ENCODE measurements at regions of chr16 and their contacts with region 1.

Region 1: GRCh38 chr16:16073891-16074881 is 124.8 kb downstream of the ABCC1 start:
- DNase-seq: peak; percentile 98 to 99
- H3K4me3 ChIP-seq: no peak overlapping the region; the same call in 1 of the 2 replicates
- H3K27ac ChIP-seq: peak overlapping the region; percentile 85
- H3K4me1 ChIP-seq: peaks cover 27% of the 10 kb centered on the region
- H3K27me3 ChIP-seq: no peaks in the 10 kb centered on the region
- CTCF ChIP-seq: no peak

Region 2: DNA sequence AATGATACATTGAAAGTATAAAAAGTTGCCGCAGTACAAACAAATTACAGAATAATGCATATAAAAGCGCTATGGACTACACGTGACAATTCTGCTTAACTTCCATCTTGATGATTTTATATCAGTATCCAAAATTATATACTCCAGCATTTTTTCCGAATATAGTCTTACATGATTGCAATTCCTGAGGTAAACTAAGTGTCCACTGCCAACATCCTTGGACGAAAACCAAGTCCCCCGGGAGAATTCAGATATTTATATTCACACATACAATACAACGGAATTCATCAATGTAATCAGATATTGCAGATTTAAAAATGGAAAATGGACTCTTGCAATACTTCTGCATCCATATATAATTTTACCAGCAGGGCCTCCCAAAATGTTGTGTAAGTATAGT is 208.4 kb before region 1 on chr16:
- CTCF ChIA-PET with region 1: no interaction called
- POLR2A ChIA-PET with region 1: interaction called, 12 read pairs
- intact Hi-C with region 1: no loop called
- DNase-seq: no peak
- H3K4me3 ChIP-seq: no peak overlapping the region
- H3K27ac ChIP-seq: no peak overlapping the region
- H3K4me1 ChIP-seq: no peaks in the 10 kb centered on the region
- H3K27me3 ChIP-seq: no peaks in the 10 kb centered on the region
- CTCF ChIP-seq: no peak

Region 3: DNA sequence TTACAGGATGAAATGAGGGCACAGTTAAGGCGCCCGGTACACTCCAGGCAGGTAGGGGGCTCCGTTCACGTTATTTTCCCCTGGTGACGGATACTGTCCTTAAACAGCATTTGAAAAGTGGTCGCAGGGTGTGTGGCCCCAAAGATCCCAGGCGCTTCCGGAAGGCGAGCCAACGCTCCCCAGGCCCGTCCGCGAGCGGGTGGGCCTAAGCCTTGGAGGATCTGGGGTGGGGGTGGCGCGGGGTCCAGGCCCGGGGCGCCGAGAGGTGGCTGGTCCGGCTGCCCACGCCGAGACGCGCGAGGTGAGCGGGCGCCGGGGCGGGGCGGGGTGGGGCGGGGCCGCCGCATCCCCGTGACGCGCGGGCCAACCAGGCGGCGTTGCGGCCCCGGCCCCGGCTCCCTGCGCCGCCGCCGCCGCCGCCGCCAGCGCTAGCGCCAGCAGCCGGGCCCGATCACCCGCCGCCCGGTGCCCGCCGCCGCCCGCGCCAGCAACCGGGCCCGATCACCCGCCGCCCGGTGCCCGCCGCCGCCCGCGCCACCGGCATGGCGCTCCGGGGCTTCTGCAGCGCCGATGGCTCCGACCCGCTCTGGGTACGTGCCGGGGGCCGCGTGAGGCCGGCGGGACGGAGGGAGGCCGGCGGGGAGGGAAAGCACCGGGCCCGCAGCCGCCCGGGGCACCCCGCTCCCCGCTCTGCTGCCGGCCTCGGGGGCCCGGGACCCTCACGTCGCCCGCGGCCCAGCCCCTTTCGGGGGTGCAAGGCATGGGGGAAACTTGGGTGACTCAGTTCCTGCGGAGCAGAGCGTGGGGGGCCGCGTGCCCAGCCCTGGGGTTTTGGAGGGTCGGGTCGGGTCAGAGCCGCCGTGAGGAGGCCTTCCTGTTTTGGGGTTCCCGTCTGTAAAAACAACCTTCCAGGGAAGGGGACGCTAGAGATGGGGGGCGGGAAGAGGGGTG is 124.7 kb before region 1 on chr16 and contains the start of gene ABCC1:
- CTCF ChIA-PET with region 1: interaction called, 3 read pairs
- POLR2A ChIA-PET with region 1: no interaction called
- intact Hi-C with region 1: loop called (anchors 1 kb)
- DNase-seq: peak in 1 of 2 experiments; percentile 51
- H3K4me3 ChIP-seq: peak within 1 kb of the TSS; percentile 96
- H3K27ac ChIP-seq: peak within 1 kb of the TSS; percentile 61
- H3K4me1 ChIP-seq: peaks cover 52% of the 10 kb centered on the region
- H3K27me3 ChIP-seq: no peaks in the 10 kb centered on the region
- CTCF ChIP-seq: no peak; the same call in 1 of the 2 replicates
- total RNA-seq, gene ABCC1: 139 and 146 TPM in 2 replicates

Region 4: DNA sequence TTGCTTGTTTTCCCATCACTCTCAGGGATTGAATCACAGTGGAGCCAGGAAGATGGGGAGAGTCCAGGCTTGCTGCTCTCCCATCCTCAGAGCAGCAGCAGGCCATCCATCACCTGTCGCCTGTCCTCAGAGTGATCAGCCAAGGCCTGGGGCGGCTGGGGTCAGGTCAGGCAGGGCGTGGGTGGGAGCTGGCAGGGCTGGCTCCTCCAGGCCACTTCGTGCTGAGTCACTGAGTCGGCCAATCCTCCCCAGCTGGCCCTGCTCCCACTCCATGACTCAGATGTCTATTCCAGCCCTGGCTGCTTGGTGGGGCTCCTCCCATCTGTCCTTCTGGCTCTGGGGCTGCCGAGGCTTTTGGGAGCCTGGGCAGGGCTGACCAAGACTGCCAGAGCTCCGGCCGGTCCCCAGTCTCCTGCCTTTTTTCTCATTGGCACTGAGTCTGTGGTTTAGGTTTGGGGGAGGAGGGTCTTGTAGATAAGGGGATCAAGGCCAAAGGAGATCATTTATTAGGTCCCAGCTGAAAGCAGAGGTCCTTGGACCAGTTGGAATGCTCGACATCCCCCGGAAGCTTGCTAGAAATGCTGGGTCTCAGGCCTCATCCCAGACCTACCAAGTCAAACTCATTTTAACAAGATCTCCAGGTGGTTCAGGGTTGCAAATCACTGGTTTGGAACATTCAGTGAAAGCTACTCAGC is 52.1 kb before region 1 on chr16:
- CTCF ChIA-PET with region 1: interaction called, 4 read pairs
- POLR2A ChIA-PET with region 1: interaction called, 11 read pairs
- intact Hi-C with region 1: loop called (anchors 1 kb)
- DNase-seq: peak; percentile 96 to 99
- H3K4me3 ChIP-seq: peak overlapping the region; percentile 37; the same call in 1 of the 2 replicates
- H3K27ac ChIP-seq: peak overlapping the region; percentile 73
- H3K4me1 ChIP-seq: peaks cover 94% of the 10 kb centered on the region
- H3K27me3 ChIP-seq: no peaks in the 10 kb centered on the region
- CTCF ChIP-seq: no peak

Region 5: DNA sequence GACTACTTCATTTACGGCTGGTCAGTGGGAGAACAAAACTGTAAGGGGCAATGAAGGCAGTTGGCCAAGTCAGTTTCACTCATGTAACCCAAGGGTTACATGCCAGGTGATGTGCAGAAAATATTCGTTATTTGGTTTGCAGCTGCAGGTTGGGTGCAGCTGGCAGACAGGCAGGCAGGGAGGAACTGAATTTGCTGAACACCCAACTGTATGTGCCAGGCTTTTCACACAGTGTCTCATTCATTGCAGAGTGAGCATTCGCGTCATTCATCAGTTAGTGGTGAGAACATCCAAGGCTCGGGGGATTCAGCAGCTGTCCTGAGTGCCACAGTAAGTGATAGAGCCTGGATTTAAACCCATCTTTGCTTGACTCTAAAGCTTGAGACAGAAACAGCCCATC is 89.4 kb after region 1 on chr16:
- CTCF ChIA-PET with region 1: no interaction called
- POLR2A ChIA-PET with region 1: no interaction called
- intact Hi-C with region 1: no loop called
- DNase-seq: no peak
- H3K4me3 ChIP-seq: no peak overlapping the region
- H3K27ac ChIP-seq: no peak overlapping the region
- H3K4me1 ChIP-seq: no peaks in the 10 kb centered on the region
- H3K27me3 ChIP-seq: no peaks in the 10 kb centered on the region
- CTCF ChIP-seq: no peak